ENCODE measurements at regions of chrX and their contacts with region 1.

Region 1: DNA sequence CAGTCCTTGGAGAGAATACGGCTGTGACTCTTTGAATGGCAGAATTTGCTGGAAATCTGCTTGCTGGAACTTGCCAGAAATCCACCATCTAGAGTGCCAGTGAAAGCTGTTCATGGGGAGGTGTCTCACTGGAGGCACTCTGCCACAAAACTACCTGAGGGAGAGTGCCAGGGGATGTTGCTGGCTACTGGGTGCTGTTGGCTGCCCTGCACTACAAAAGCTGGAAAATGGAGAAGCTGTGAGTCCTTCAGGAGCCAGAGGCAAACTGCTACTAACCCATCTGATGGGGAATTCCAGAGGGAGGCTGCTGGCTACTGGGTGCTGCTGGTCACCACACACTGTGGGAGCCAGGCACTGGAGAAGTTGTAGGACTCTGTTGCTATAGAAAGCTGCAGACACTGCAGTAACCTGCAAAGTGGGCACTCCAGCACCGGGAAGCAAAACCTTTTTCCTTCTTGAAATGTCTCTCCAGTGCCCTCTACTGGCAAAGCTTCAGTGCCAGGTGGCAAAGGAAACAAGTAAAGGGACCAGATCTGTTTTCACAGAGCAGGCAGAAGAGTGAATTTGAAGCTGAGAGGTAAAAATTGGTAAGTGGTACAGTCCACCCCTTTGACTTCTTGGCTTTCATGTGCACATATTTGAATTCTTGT is 47.8 kb upstream of the HSD17B10 start:
- DNase-seq: peak; percentile 81
- ATAC-seq: peak; percentile 80
- H3K4me3 ChIP-seq: 0 out of 2 replicates have a peak overlapping the region, but pooled peaks have one; percentile 14
- H3K27ac ChIP-seq: no peak overlapping the region
- H3K4me1 ChIP-seq: 0 out of 2 replicates have a peak, but pooled peaks cover 5% of the 10 kb centered on the region
- H3K27me3 ChIP-seq: no peaks in the 10 kb centered on the region
- CTCF ChIP-seq: peak; percentile 85

Region 2: DNA sequence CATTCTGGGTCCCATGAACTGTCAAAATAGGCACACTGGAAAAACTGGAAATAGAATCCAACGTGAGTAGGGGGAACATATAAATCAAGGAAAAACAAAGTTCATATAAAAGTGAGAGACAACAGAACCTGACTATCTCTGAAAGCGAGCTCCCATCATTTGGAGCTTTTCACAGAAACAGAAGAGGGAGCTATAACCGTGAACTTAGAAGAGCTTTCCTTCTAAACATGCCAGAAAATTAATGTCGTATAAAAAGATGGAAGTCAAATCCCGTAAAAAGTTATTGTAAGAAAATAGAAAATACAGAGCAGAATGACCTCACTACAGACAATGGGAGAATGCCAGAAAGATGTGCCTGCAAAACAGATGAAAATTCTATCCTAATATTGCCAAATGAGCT is 23.9 kb before region 1 on chrX:
- CTCF ChIA-PET with region 1: interaction called, 16 read pairs
- POLR2A ChIA-PET with region 1: interaction called, 3 read pairs
- intact Hi-C with region 1: loop called (anchors 1 kb)
- DNase-seq: peak; percentile 9
- ATAC-seq: peak; percentile 43
- H3K4me3 ChIP-seq: no peak overlapping the region
- H3K27ac ChIP-seq: no peak overlapping the region
- H3K4me1 ChIP-seq: peaks cover 5% of the 10 kb centered on the region; the same call in 1 of the 2 replicates
- H3K27me3 ChIP-seq: no peaks in the 10 kb centered on the region
- CTCF ChIP-seq: peak; percentile 50

Measured in PC-3 (cell line).